Activated CD4-positive, alpha-beta T cell treated with anti-CD3 and anti-CD28 coated beads, Interleukin-2, amount 10 ng/mL, durations not matched to agents 7 days and 5 days (primary cell): ENCODE measurements at regions of chr19 and their contacts with region 1.

Region 1: GRCh38 chr19:3137119-3137518 is 1.3 kb downstream of the GNA15 start:
- DNase-seq: no peak
- H3K4me3 Mint-ChIP-seq: peak overlapping the region; percentile 75
- H3K27ac Mint-ChIP-seq: peak overlapping the region; percentile 83
- H3K4me1 Mint-ChIP-seq: peaks cover 60% of the 10 kb centered on the region
- H3K27me3 Mint-ChIP-seq: peaks cover 2% of the 10 kb centered on the region

Region 2: DNA sequence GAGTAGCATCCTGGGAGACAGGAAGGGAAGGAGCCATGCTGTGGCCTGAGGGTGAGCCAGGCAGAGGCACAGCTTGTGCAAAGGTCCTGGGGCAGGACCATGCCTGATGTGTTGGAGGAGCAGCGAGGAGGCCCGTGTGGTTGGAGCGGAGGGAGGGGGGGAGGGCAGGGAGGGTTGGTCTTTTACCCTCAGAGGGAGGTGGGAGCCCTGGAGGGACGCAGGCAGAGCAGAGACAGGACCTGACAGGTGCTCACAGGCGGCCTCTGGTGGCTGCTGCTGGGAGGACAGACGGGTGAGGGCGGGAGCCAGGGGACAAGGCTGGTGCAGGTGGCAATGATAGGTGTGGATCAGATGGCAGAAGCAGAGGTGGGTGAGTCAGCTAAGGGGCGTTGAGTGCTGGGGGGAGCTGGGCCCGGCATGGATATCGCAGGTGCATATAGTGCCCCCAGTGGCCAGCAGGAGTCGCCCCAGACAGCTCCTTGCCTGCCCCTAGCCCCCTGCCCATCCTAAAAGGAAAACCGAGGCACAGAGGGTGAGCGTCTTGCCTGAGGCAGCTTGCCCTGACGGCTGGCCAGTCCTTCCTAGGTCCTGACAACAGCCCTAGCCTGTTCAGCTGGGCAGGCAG is 11.1 kb before region 1 on chr19:
- CTCF ChIA-PET with region 1: interaction called, 23 read pairs
- POLR2A ChIA-PET with region 1: no interaction called
- DNase-seq: peak; percentile 87
- H3K4me3 Mint-ChIP-seq: no peak overlapping the region
- H3K27ac Mint-ChIP-seq: no peak overlapping the region
- H3K4me1 Mint-ChIP-seq: peaks cover 18% of the 10 kb centered on the region
- H3K27me3 Mint-ChIP-seq: peaks cover 5% of the 10 kb centered on the region

Region 3: DNA sequence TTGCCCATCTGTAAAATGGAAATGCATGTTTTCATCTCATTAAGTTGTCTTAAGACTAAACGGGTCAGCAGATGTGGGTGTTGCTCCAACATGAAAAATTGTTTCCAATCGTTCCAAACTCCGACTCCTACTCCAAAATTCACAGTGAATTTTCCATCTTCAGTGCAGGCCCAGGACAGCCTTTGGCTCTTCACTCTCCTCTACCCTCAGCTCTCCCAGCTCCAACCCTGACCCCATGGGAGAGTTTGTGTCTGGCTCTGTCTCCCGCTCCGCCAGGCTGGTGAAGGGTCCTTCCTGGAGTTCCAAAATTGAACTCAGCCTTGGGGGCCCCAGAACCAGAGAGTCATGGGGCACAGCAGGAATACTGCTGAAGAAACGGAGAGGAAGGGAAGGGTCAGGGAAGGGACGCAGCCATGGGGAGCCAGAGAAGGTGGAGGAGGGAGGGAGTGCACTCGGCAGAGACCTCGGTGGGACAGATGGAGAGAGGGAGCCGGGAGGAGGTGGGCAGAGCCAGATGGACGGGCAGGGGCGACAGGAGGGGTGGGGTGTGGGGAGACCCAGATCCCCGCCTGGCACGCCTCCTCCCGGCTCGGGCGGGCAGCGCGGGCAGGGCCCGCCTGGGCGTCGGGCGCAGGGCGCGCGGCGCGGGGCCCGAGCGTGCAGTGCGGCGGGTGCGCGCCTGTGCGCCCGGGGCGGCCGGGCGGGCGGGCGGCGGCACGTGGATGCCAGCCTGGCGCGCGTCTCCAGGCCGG is 133.0 kb after region 1 on chr19:
- CTCF ChIA-PET with region 1: no interaction called
- POLR2A ChIA-PET with region 1: no interaction called
- DNase-seq: no peak
- H3K4me3 Mint-ChIP-seq: no peak overlapping the region
- H3K27ac Mint-ChIP-seq: no peak overlapping the region
- H3K4me1 Mint-ChIP-seq: peaks cover 7% of the 10 kb centered on the region
- H3K27me3 Mint-ChIP-seq: peaks cover 27% of the 10 kb centered on the region